Activated naive CD8-positive, alpha-beta T cell treated with anti-CD3 and anti-CD28 coated beads, Interleukin-2, amount 10 ng/mL, durations not matched to agents 7 days and 5 days (primary cell): ENCODE measurements at regions of chr13 and their contacts with region 1.

Region 1: GRCh38 chr13:114110091-114110829 is 22.2 kb downstream of the RASA3 start:
- DNase-seq: peak; percentile 76
- ATAC-seq: peak; percentile 93
- H3K4me3 Mint-ChIP-seq: peak overlapping the region; percentile 88
- H3K27ac Mint-ChIP-seq: peak overlapping the region; percentile 97
- H3K4me1 Mint-ChIP-seq: peaks cover 40% of the 10 kb centered on the region
- H3K27me3 Mint-ChIP-seq: no peaks in the 10 kb centered on the region

Region 2: GRCh38 chr13:113928685-113929627 is 181.3 kb before region 1 on chr13:
- POLR2A ChIA-PET with region 1: no interaction called
- DNase-seq: no peak
- ATAC-seq: no peak
- H3K4me3 Mint-ChIP-seq: no peak overlapping the region
- H3K27ac Mint-ChIP-seq: no peak overlapping the region
- H3K4me1 Mint-ChIP-seq: peaks cover 9% of the 10 kb centered on the region
- H3K27me3 Mint-ChIP-seq: peaks cover 34% of the 10 kb centered on the region

Region 3: DNA sequence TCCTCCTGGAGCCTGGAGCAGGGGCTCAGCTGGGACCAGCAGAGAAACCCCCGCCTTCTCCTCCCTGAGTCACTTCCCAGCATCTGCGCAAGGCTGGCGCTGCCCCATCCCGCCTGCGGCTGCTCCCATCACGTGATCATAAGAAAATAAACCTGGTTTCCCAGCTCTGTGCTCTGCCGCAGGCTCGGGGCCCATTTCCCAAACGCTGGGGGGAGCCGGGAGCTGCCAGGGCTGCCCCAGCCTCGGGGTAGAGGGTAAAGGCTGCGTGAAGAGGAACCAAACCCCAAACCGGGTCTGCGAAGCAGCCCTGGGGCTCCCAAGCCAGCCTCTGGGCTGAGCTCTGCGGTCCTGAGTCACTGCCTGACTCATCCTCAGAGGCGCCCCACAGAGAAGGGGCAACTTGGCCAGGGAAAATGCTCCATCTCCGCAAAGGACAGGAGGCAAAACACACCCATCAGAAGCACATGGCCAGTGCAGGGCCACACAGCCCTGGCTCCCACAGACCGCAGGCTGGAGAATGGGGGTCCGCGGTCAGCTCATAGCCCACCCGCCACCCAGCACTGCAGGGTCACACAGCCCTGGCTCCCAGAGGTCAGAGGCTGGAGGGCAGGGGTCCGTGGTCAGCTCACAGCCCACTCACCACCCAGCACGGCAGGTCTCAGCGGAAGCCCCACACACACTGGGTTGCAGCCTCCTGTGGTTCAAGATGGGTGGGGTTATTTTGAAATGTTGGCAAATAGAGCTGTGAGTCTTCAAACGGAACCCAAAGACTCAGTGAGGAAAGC is 44.9 kb before region 1 on chr13:
- POLR2A ChIA-PET with region 1: interaction called, 10 read pairs
- DNase-seq: peak; percentile 65
- ATAC-seq: peak; percentile 73
- H3K4me3 Mint-ChIP-seq: peak overlapping the region; percentile 76
- H3K27ac Mint-ChIP-seq: peak overlapping the region; percentile 87
- H3K4me1 Mint-ChIP-seq: peaks cover 45% of the 10 kb centered on the region
- H3K27me3 Mint-ChIP-seq: no peaks in the 10 kb centered on the region

Region 4: DNA sequence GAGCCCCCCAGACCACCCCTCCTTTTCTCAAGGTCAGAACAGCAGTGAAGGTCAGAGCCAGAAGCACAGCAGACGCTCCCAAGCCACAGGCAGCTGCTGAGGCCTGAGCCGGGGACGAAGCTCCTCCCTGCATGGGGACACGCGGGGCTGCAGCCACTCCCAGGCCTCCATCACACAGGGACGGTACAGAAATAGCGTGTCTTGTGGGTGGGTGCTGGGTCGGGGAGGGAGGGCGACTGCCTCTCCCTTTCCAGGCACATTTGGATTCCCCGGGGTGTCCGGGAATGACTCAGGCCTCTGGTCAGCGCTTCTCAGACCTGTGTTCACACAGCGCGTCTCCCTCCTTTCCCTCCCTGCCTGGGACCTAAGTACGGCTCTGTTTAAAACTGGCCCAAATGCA is 11.1 kb before region 1 on chr13:
- POLR2A ChIA-PET with region 1: no interaction called
- DNase-seq: peak; percentile 23
- ATAC-seq: no peak
- H3K4me3 Mint-ChIP-seq: no peak overlapping the region
- H3K27ac Mint-ChIP-seq: no peak overlapping the region
- H3K4me1 Mint-ChIP-seq: peaks cover 9% of the 10 kb centered on the region
- H3K27me3 Mint-ChIP-seq: no peaks in the 10 kb centered on the region

Region 5: GRCh38 chr13:114132419-114133121 is 22.3 kb after region 1 on chr13 and contains the start of gene RASA3:
- POLR2A ChIA-PET with region 1: interaction called, 18 read pairs
- DNase-seq: peak; percentile 76
- ATAC-seq: peak; percentile 32
- H3K4me3 Mint-ChIP-seq: peak within 1 kb of the TSS; percentile 98
- H3K27ac Mint-ChIP-seq: peak within 1 kb of the TSS; percentile 83
- H3K4me1 Mint-ChIP-seq: peaks cover 43% of the 10 kb centered on the region
- H3K27me3 Mint-ChIP-seq: peaks cover 13% of the 10 kb centered on the region
- total RNA-seq, gene RASA3: 65.6 to 73.9 TPM

Region 6: GRCh38 chr13:114143806-114144605 is 33.7 kb after region 1 on chr13:
- POLR2A ChIA-PET with region 1: interaction called, 12 read pairs
- DNase-seq: peak; percentile 50
- ATAC-seq: peak; percentile 19
- H3K4me3 Mint-ChIP-seq: no peak overlapping the region
- H3K27ac Mint-ChIP-seq: peak overlapping the region; percentile 35
- H3K4me1 Mint-ChIP-seq: peaks cover 35% of the 10 kb centered on the region
- H3K27me3 Mint-ChIP-seq: peaks cover 10% of the 10 kb centered on the region